MCF 10A (cell line): ENCODE measurements at regions of chr2 and their contacts with region 1.

Region 1: GRCh38 chr2:121284463-121285449 is at the start of gene TFCP2L1:
- DNase-seq: peak; percentile 61
- H3K4me3 Mint-ChIP-seq: peak within 1 kb of the TSS; percentile 97
- H3K27ac Mint-ChIP-seq: peak within 1 kb of the TSS; percentile 98
- H3K4me1 Mint-ChIP-seq: peaks cover 22% of the 10 kb centered on the region
- H3K27me3 Mint-ChIP-seq: no peaks in the 10 kb centered on the region
- CTCF ChIP-seq: no peak
- total RNA-seq, gene TFCP2L1: 22.6 and 24.3 TPM in 2 replicates

Region 2: DNA sequence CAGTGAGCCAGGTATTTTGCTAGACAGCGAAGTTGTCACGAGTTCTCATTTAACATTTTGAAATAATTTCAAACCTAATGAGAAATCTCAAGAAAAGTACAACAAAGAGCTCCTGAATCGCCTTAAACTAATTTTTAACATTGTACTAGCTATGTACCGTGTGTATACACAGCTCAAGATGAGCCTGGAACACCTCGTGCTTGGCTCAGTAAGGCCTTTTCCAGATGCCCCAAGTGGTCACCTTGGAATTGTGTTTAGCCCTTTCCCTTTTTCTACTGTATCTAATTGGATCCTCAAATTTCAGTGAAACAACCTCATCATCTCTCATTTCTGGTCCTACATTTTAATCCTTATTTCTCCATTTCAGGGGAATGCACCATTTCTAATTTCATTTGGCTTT is 1517.8 kb before region 1 on chr2:
- CTCF ChIA-PET with region 1: no interaction called
- POLR2A ChIA-PET with region 1: no interaction called
- intact Hi-C with region 1: no loop called
- DNase-seq: no peak
- H3K4me3 Mint-ChIP-seq: no peak overlapping the region
- H3K27ac Mint-ChIP-seq: no peak overlapping the region
- H3K4me1 Mint-ChIP-seq: peaks cover 45% of the 10 kb centered on the region
- H3K27me3 Mint-ChIP-seq: no peaks in the 10 kb centered on the region
- CTCF ChIP-seq: no peak

Region 3: GRCh38 chr2:121272581-121273515 is 11.9 kb before region 1 on chr2:
- CTCF ChIA-PET with region 1: no interaction called
- POLR2A ChIA-PET with region 1: interaction called, 24 read pairs
- intact Hi-C with region 1: no loop called
- DNase-seq: no peak
- H3K4me3 Mint-ChIP-seq: no peak overlapping the region
- H3K27ac Mint-ChIP-seq: no peak overlapping the region
- H3K4me1 Mint-ChIP-seq: no peaks in the 10 kb centered on the region
- H3K27me3 Mint-ChIP-seq: no peaks in the 10 kb centered on the region
- CTCF ChIP-seq: no peak